ENCODE measurements at regions of chr1 and their contacts with region 1.

Region 1: DNA sequence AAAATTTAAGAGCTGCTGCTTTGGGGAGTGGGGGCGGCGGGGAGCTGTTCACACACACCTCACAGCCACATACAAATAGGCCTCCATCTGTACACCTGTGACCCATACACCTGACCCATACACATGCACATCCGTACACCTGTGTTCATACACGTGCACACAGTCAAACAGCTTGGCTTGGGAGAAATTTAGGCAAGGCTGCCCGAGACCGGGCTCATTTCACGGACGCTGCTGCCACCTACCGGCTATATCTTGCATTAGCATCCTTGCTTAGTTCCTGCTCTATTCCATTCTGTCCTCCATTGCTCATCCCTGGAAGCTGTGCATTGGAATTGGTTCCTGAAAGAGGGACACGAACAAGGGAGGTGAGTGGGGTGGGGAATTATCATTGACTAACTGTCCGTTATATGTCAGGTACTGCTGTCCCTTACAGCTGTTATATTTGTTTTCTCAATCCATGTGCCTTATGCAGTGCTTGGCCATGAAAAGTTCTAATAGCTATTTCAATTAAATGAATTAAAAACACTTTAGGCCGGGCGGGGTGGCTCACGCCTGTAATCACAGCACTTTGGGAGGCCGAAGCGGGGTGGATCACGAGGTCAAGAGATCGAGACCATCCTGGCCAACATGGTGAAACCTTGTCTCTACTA is 37.1 kb upstream of the EPB41 start:
- DNase-seq: peak; percentile 92

Region 2: GRCh38 chr1:28518000-28518744 is 359.1 kb before region 1 on chr1:
- CTCF ChIA-PET with region 1: no interaction called
- POLR2A ChIA-PET with region 1: no interaction called
- DNase-seq: peak; percentile 96

Region 3: GRCh38 chr1:28642847-28643635 is 234.2 kb before region 1 on chr1 and contains the start of gene TAF12:
- CTCF ChIA-PET with region 1: interaction called, 6 read pairs
- POLR2A ChIA-PET with region 1: interaction called, 21 read pairs
- DNase-seq: peak; percentile 98

Region 4: DNA sequence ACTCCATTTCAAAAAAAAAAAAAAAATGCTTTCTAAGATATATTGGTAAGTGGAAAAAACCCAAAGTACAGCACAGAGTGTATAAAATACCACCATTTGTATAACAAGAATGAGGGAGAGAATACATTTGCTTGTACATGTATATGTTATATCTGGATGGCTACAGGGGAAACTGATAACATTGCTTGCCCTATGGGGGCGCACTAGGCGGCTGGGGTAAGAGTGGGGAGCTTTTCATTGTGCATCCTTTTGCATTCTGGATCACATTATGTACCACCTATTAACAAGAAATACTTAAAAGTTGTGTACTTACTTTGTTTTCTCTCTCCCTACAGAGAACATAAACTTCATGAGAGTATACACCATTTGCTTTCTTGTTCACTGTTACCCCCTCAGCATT is 93.9 kb before region 1 on chr1:
- CTCF ChIA-PET with region 1: interaction called, 33 read pairs
- POLR2A ChIA-PET with region 1: interaction called, 3 read pairs
- DNase-seq: no peak

Region 5: DNA sequence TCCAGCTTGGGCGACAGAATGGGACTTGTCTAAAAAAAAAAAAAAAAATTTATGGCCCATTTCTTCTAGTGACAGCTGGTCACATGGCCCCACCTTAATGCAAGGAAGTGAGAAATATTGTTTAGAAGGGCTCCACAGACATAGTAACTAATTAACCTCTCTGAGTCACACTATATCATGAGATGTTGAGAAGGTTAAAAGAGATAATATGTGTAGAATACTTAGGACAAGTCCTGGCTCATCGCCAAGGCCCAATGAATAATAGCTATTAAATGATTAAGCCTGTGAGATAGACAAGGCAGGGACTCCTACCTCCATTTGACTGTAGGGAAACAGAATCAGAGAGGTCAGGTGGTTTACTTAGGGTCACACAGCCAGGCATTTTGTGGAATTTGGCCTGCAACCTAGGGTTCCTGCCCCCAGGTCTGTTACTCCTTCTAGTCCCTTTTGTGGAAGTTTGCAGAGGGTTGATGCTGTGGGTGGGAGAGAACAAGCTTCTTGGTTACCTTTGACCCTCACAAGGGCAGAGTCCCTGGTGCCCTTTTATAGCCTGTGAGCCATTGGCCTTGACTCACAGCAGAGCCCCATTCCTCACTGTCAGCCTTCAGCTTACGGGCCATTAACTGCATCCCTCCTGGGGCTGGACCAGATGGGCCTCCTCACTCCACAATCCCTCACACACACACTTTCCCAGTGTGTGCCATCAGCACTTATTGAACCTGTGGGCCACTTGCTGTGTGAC is 16.8 kb before region 1 on chr1:
- CTCF ChIA-PET with region 1: interaction called, 15 read pairs
- POLR2A ChIA-PET with region 1: no interaction called
- DNase-seq: peak; percentile 81

Region 6: DNA sequence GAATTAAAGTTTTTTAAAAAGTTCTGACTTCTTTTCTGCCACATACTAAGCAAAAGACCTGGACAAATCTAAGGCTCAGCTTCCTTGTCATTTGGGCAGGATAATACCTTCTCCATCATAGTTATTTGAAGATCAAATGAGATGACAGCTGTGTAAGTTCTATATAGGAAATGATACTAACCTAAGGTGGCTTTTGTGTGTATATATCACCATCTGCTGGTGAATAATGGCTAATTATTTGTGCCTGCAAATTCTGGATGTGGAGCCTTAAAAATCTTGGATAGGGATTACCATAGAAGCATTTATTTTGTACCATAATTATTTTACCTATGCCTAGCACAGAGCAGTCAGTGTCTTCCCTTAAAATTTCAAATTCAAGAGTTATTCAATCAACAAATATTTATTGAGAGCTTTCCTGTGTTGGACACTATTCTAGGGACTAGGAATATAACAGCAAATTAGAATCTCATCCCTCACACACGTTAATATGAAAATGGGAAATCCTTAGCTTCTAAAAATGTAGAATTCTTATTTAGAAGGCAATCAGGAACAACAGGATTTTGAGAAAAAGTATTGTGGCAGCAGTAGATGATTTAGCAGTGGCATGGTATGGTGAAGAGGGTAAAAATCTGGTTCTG is 156.7 kb after region 1 on chr1:
- CTCF ChIA-PET with region 1: interaction called, 73 read pairs
- POLR2A ChIA-PET with region 1: interaction called, 5 read pairs
- DNase-seq: peak; percentile 67